ENCODE measurements at regions of chr12 and their contacts with region 1.

Region 1: GRCh38 chr12:9707864-9708808 is 24.8 kb downstream of the CLECL1 start:
- DNase-seq: peak; percentile 54 to 64
- H3K4me3 ChIP-seq: no peak overlapping the region
- H3K4me3 Mint-ChIP-seq: no peak overlapping the region
- H3K27ac Mint-ChIP-seq: no peak overlapping the region
- H3K4me1 ChIP-seq: peaks cover 4% of the 10 kb centered on the region
- H3K4me1 Mint-ChIP-seq: peaks cover 9% of the 10 kb centered on the region
- H3K27me3 ChIP-seq: no peaks in the 10 kb centered on the region
- H3K27me3 Mint-ChIP-seq: no peaks in the 10 kb centered on the region
- CTCF ChIP-seq: peak; percentile 96 to 98

Region 2: GRCh38 chr12:9464408-9464807 is 243.7 kb before region 1 on chr12:
- CTCF ChIA-PET with region 1: no interaction called
- POLR2A ChIA-PET with region 1: interaction called, 4 read pairs
- intact Hi-C with region 1: loop called (anchors 1 kb)
- DNase-seq: no peak
- H3K4me3 ChIP-seq: no peak overlapping the region
- H3K4me3 Mint-ChIP-seq: no peak overlapping the region
- H3K27ac Mint-ChIP-seq: no peak overlapping the region
- H3K4me1 ChIP-seq: 0 out of 2 replicates have a peak, but pooled peaks cover 5% of the 10 kb centered on the region
- H3K4me1 Mint-ChIP-seq: peaks cover 15% of the 10 kb centered on the region
- H3K27me3 ChIP-seq: no peaks in the 10 kb centered on the region
- H3K27me3 Mint-ChIP-seq: no peaks in the 10 kb centered on the region
- CTCF ChIP-seq: no peak

Region 3: DNA sequence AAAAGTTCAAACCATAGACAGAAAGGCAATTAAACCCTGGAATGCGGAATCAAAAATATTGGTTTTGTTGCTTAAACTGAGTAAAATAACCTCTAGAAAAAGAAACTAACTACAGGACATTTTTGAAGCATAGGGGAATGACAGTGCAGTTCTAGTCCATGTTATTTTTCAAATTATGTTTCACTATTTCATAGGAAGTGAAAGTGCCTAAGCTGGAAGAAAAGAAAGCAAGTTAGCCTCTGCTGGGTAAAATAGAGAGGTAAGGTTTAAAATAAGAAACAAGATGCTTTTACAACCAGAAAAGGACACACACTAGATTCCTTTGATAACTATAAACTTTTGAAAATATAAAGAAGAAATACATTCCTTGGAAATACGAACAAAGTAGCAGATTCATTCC is 23.7 kb after region 1 on chr12:
- CTCF ChIA-PET with region 1: no interaction called
- POLR2A ChIA-PET with region 1: no interaction called
- intact Hi-C with region 1: no loop called
- DNase-seq: no peak
- H3K4me3 ChIP-seq: no peak overlapping the region
- H3K4me3 Mint-ChIP-seq: no peak overlapping the region
- H3K27ac Mint-ChIP-seq: no peak overlapping the region
- H3K4me1 ChIP-seq: no peaks in the 10 kb centered on the region
- H3K4me1 Mint-ChIP-seq: no peaks in the 10 kb centered on the region
- H3K27me3 ChIP-seq: no peaks in the 10 kb centered on the region; the same call in 1 of the 2 replicates
- H3K27me3 Mint-ChIP-seq: peaks cover 12% of the 10 kb centered on the region
- CTCF ChIP-seq: no peak